ENCODE measurements at regions of chr14 and their contacts with region 1.

Region 1: DNA sequence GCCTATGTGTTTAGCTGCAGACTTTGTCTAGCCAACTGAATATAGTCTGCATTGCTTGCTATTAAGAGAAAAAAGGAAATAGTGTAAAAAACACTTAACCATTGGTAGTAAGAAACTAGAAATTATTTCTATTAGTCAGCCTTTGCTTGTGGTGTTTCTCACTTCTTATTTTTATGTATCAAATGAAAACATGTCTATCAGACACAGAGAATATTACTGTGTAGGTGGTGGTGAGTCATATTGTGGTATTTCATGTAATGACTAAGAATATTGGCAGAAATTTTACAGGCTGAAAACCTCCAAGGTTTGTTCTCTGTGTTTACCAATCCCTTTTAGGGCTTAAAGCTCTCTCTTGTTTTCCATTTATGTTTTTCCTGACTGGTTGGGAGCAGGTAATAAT is 87.2 kb downstream of the DAAM1 start:
- DNase-seq: peak; percentile 92
- H3K4me3 ChIP-seq: no peak overlapping the region
- H3K27ac ChIP-seq: peak overlapping the region; percentile 89
- H3K4me1 ChIP-seq: peaks cover 58% of the 10 kb centered on the region
- H3K27me3 ChIP-seq: no peaks in the 10 kb centered on the region
- CTCF ChIP-seq: no peak

Region 2: GRCh38 chr14:59245809-59246295 is 29.8 kb before region 1 on chr14:
- CTCF ChIA-PET with region 1: no interaction called
- dilution Hi-C with region 1: no loop called
- in situ Hi-C with region 1: no loop called
- intact Hi-C with region 1: loop called (anchors 2 kb)
- DNase-seq: peak; percentile 43
- H3K4me3 ChIP-seq: no peak overlapping the region
- H3K27ac ChIP-seq: peak overlapping the region; percentile 66
- H3K4me1 ChIP-seq: peaks cover 25% of the 10 kb centered on the region
- H3K27me3 ChIP-seq: no peaks in the 10 kb centered on the region
- CTCF ChIP-seq: no peak

Region 3: DNA sequence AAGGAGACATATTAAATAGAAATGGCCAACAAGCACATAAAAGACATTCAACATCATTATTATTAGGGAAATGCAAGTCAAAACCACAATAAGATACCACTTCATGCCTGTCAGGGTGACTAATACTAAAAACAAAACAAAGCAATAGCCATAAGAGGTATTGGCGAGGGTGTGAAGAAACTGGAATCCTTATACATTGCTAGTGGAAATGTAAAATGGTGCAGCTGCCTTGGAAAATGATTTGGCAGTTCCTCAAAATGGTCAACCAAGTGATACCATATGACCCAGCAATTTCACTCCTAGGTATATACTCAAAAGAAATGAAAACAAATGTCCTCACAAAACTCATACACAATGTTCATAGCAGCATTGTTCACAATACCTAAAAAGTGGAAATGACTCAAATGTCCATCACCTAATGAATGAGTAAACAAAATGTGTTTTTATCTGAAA is 162.6 kb after region 1 on chr14:
- CTCF ChIA-PET with region 1: no interaction called
- dilution Hi-C with region 1: no loop called
- in situ Hi-C with region 1: no loop called
- intact Hi-C with region 1: loop called (anchors 5 kb)
- DNase-seq: peak; percentile 74
- H3K4me3 ChIP-seq: no peak overlapping the region
- H3K27ac ChIP-seq: no peak overlapping the region
- H3K4me1 ChIP-seq: peaks cover 16% of the 10 kb centered on the region
- H3K27me3 ChIP-seq: no peaks in the 10 kb centered on the region
- CTCF ChIP-seq: no peak

Measured in mammary epithelial cell (primary cell).